A549 (cell line): ENCODE measurements at regions of chr2 and their contacts with region 1.

Region 1: GRCh38 chr2:75614056-75614710 is 32.4 kb upstream of the MRPL19 start:
- DNase-seq: no peak
- ATAC-seq: no peak
- H3K4me3 ChIP-seq: no peak overlapping the region
- H3K27ac ChIP-seq: no peak overlapping the region
- H3K4me1 ChIP-seq: no peaks in the 10 kb centered on the region
- CTCF ChIP-seq: no peak
- EP300 ChIP-seq: no peak
- POLR2A ChIP-seq: no peak
- RAD21 ChIP-seq: no peak

Region 2: GRCh38 chr2:75311993-75312392 is 302.2 kb before region 1 on chr2:
- CTCF ChIA-PET with region 1: no interaction called
- POLR2A ChIA-PET with region 1: no interaction called
- DNase-seq: peak in 1 of 2 experiments; percentile 32
- ATAC-seq: peak; percentile 93 to 96
- H3K4me3 ChIP-seq: no peak overlapping the region
- H3K27ac ChIP-seq: no peak overlapping the region
- H3K4me1 ChIP-seq: peaks cover 18% of the 10 kb centered on the region
- CTCF ChIP-seq: no peak
- EP300 ChIP-seq: no peak
- POLR2A ChIP-seq: no peak
- RAD21 ChIP-seq: no peak

Region 3: DNA sequence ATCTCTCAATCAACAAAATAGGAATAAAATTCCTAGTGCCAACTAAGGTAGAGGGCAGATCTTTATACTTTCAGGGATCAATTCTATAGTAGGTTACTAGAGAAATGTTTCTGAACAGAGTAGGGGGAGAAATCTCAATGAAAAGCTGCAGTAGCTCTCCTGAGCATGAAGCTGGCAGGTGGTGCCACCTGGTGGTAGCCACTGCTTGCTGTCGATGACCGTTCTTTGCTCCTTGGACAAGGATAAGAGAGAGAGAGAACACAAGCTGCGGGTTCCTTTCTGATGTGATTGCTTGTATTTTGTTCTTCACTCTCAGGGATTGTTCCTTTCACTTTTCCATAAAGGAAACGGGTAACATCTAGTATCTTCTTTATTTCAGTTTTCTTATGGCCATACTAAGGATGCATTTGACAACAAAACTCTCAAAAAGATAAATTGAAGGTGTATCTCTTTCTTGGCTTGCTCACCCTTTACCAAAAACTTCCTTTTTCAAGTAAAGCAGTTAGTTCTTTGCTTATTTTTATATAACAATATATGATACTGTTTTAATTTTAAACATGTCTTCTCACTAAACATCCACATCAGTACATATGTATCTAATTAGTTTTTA is 13.8 kb after region 1 on chr2:
- CTCF ChIA-PET with region 1: interaction called, 28 read pairs
- POLR2A ChIA-PET with region 1: no interaction called
- DNase-seq: peak; percentile 80 to 82
- ATAC-seq: peak; percentile 95 to 97
- H3K4me3 ChIP-seq: no peak overlapping the region
- H3K27ac ChIP-seq: no peak overlapping the region
- H3K4me1 ChIP-seq: no peaks in the 10 kb centered on the region
- CTCF ChIP-seq: peak; percentile 97
- EP300 ChIP-seq: no peak
- POLR2A ChIP-seq: no peak
- RAD21 ChIP-seq: peak; percentile 85 to 92